MCF 10A (cell line): ENCODE measurements at regions of chr13 and their contacts with region 1.

Region 1: GRCh38 chr13:40109356-40109844 is 453.9 kb downstream of the COG6 start:
- DNase-seq: peak; percentile 94
- H3K4me3 Mint-ChIP-seq: peak overlapping the region; percentile 53
- H3K27ac Mint-ChIP-seq: peak overlapping the region; percentile 88
- H3K4me1 Mint-ChIP-seq: peaks cover 59% of the 10 kb centered on the region
- H3K27me3 Mint-ChIP-seq: no peaks in the 10 kb centered on the region
- CTCF ChIP-seq: no peak

Region 2: GRCh38 chr13:40094056-40094455 is 15.3 kb before region 1 on chr13:
- CTCF ChIA-PET with region 1: interaction called, 5 read pairs
- POLR2A ChIA-PET with region 1: interaction called, 14 read pairs
- intact Hi-C with region 1: no loop called
- DNase-seq: peak; percentile 88
- H3K4me3 Mint-ChIP-seq: no peak overlapping the region
- H3K27ac Mint-ChIP-seq: no peak overlapping the region
- H3K4me1 Mint-ChIP-seq: peaks cover 6% of the 10 kb centered on the region
- H3K27me3 Mint-ChIP-seq: no peaks in the 10 kb centered on the region
- CTCF ChIP-seq: no peak

Region 3: DNA sequence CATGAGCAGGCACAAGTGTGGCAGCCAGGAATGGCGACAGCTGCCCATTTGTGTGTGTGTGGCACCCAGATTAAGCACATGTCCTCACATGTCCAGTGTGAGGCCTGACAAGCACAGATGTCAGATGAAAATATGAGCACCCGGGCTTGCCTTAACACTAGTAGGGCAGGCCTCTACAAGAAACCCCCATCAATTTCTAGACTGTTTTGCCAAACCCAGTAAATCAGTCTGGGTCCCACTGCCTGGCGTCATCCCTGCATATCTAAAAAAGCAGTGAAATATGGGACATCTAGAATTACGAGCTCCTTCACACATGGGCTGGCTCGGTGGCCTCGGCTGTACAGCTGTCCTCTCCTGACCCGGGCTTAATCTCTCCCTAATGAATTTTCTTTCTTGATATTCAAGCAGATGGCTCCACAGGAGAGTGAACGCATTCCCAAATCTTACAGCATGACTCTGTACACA is 124.4 kb after region 1 on chr13:
- CTCF ChIA-PET with region 1: interaction called, 5 read pairs
- POLR2A ChIA-PET with region 1: interaction called, 7 read pairs
- intact Hi-C with region 1: loop called (anchors 5 kb)
- DNase-seq: peak; percentile 24
- H3K4me3 Mint-ChIP-seq: no peak overlapping the region
- H3K27ac Mint-ChIP-seq: no peak overlapping the region
- H3K4me1 Mint-ChIP-seq: peaks cover 66% of the 10 kb centered on the region
- H3K27me3 Mint-ChIP-seq: no peaks in the 10 kb centered on the region
- CTCF ChIP-seq: no peak